Caki2 (cell line): ENCODE measurements at regions of chr20 and their contacts with region 1.

Region 1: DNA sequence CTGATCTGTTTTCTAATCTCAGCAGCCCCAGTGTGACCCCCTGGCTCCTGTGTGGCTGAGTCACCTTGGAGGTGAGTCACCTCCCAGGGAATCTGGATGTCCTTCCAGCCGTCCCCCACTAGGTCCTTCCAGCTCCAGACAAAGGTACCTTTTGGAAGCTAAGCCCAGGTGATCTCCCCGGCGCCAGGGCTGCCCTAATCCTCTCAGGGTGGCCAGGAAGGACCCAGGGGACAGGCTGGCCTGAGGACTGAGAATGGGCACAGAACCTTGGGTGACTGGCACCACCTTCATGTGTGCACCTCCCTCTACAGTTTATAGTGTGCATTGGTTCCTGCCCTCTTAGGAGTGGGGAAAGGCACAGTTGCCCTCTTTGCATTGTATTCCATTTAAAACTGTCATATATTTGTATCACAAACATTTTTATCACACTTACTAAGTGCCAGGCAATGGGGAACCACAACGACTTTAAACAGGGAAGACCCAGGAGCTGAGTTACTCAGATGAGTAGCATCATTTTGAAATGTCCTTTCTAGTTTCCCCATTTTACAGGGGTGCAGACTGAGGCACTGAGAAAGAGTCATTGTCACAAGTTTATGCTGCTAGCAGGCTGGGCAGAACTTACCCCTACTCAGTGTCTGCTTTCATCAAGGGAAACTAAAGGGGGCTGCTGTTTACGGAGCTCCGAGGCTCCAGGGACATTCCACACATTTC is 2.6 kb upstream of the BPIFB4 start:
- DNase-seq: peak; percentile 24

Region 2: GRCh38 chr20:32920066-32920465 is 156.8 kb before region 1 on chr20:
- in situ Hi-C with region 1: loop called (anchors 10 kb)
- DNase-seq: no peak

Region 3: DNA sequence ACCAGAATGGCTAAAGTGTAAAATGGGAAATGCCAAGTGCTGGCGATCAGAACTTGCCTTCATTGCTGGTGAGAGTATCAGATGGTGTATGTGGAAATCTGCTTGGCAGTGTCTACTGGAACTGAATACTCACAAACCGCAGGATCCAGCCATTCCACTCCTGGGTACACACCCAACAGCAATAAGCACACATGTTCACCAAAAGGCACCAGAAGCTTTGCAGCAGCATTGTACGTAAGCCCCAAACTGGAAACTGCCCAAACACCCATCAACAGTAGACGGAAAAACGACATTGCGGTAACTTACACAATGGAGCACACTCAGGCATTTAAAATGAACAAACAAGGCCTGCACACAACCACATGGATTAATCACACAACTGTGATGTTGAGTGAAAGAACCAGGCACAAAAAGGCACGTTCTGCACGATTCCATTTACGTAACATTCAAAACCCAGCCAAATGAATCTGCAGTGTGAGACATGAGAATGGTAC is 53.8 kb after region 1 on chr20:
- in situ Hi-C with region 1: no loop called
- DNase-seq: no peak

Region 4: DNA sequence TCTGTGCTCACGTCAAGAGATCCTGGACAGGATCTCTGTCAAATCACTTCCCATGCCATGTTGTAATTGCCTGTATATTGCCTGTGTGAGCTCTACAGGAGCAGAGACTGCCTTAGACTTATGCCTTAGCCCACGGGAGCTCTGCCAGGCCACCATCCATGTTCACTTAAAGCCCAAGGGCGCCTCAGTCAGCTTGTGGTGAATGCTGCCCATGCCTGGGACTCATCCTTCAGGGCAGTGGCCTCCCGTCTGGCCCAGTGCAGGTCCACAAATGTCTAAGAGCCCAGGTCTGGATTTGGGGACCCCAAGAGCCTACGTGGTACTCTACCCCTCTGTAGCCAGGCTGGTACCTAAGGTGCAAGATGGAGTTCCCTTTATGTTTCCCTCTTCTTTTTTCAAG is 68.7 kb after region 1 on chr20:
- in situ Hi-C with region 1: no loop called
- DNase-seq: no peak

Region 5: DNA sequence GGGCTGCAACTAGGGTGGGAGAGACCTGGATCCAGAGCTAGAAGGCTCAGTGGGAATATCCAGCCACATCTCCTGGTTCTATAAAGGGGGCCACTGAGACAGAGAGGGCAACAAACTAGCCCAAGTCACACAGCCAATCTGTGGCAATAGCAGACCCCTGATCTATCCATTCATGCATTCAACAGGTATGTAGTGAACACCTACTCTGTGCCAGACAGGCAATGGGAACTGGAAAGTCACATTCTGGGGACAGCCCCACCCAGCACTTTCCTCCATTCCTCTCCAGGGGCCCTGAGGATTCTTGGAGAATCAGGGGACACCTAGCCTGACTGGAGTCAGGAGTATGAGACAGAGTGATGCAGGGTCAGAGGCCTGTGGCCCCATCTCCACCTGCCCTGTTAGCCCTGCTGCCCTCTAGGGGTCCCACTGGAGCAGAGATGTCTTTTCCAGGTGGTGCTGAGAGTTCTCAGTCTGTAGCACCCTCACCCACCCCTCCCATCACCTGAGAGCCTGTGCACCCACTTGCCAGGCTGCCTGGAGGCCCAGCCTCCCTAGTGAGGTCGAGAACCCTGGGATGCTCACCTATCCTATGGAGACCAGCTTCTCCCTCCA is 104.8 kb after region 1 on chr20:
- in situ Hi-C with region 1: no loop called
- DNase-seq: no peak